AG04450 (cell line): ENCODE measurements at regions of chr21 and their contacts with region 1.

Region 1: DNA sequence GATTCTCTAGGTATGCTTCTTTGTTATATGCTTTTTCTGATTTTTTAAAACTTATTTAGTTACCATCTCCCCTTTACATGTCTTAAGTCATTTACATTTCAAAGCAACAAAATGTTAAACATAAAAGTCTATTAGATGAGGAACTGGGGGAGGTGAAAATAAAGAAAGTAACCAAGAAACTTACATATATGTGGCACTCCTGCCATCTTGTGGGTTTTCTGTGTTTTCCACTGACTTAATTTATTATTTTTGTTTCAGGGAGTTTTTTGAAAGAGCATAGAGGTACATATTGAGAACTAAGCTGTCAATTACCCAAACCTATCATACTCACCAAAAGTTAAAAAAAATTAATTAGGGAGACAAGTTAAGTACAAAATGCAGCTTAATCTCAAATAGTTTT is 1531.1 kb downstream of the MRPL39 start:
- DNase-seq: peak; percentile 10
- H3K4me3 ChIP-seq: no peak overlapping the region
- H3K27ac ChIP-seq: no peak overlapping the region
- H3K27me3 ChIP-seq: no peaks in the 10 kb centered on the region
- CTCF ChIP-seq: peak; percentile 27; the same call in 1 of the 2 replicates

Region 2: GRCh38 chr21:23853796-23854379 is 222.3 kb before region 1 on chr21:
- CTCF ChIA-PET with region 1: interaction called, 12 read pairs
- POLR2A ChIA-PET with region 1: no interaction called
- DNase-seq: peak; percentile 7
- H3K4me3 ChIP-seq: no peak overlapping the region
- H3K27ac ChIP-seq: no peak overlapping the region
- H3K27me3 ChIP-seq: no peaks in the 10 kb centered on the region
- CTCF ChIP-seq: peak; percentile 70